ENCODE measurements at regions of chr15 and their contacts with region 1.

Region 1: DNA sequence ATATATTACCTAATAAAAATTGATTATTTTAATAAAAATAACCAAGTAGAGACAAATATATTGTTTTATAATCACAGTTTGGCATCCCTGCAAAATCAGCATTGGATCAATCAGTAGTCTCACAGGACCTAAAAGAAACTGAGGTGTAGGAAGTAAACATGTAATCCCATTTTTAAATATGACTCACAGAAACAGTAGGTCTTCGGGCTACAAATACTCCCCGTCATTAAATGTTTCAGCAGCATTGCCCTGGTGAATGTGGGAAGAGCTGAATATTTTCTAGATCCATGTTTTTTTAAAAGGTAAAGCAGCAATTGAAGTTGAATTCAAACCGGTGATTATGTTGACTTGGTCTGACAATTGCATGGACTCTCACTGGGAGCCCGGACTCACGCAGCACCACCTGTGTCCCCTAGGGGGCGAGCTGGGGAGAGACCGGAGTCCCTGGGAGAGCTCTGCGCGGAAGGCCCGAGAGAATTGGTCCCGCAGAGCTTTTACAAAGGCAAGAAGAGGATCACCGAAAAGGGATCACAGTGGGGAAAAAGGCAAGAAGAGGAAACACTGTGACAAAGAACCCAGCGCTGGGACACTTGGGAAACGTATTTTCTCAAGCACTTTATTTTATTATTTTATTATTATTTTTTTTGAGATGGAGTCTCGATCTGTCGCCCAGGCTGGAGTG is 17.2 kb upstream of the USP3 start:
- DNase-seq: peak; percentile 88 to 93
- ATAC-seq: peak; percentile 96 to 100 (median 99)
- H3K4me3 ChIP-seq: no peak overlapping the region
- H3K4me3 Mint-ChIP-seq: peak overlapping the region; percentile 72
- H3K27ac ChIP-seq: no peak overlapping the region
- H3K27ac Mint-ChIP-seq: peak overlapping the region in 1 of 2 donors; percentile 75
- H3K4me1 ChIP-seq: peaks cover 42% of the 10 kb centered on the region
- H3K4me1 Mint-ChIP-seq: peaks cover 17 to 23% of the 10 kb centered on the region in 2 donors
- H3K27me3 ChIP-seq: no peaks in the 10 kb centered on the region
- H3K27me3 Mint-ChIP-seq: no peaks in the 10 kb centered on the region
- CTCF ChIP-seq: peak; percentile 96

Region 2: GRCh38 chr15:63466378-63467192 is 20.6 kb before region 1 on chr15:
- intact Hi-C with region 1: no loop called
- DNase-seq: peak; percentile 26 to 89
- ATAC-seq: peak; percentile 86 to 97 (median 97)
- H3K4me3 ChIP-seq: no peak overlapping the region
- H3K4me3 Mint-ChIP-seq: no peak overlapping the region
- H3K27ac ChIP-seq: no peak overlapping the region
- H3K27ac Mint-ChIP-seq: no peak overlapping the region
- H3K4me1 ChIP-seq: peaks cover 6% of the 10 kb centered on the region
- H3K4me1 Mint-ChIP-seq: peaks cover 0 to 9% of the 10 kb centered on the region in 2 donors
- H3K27me3 ChIP-seq: no peaks in the 10 kb centered on the region
- H3K27me3 Mint-ChIP-seq: peaks cover 6 to 23% of the 10 kb centered on the region in 2 donors
- CTCF ChIP-seq: peak; percentile 74

Region 3: DNA sequence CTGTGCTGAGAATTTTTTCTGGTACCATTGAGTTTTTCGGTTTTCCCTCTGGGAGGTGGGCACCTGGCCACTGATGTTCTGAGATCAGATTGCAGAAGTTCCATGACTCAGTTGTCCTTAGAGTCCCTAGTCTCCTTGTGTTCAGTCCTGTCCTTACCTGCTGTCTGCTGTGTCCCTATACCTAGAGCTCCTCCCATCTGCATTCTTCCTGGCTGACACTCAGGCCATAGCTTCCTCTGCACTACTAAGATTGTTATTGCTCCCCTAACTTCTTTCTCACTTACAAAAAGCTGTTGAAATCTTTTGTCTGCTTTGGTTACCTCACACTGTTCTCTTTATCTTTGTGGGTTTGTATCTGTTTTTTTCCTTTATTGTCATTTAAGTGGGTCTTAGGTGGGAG is 30.4 kb after region 1 on chr15:
- intact Hi-C with region 1: loop called (anchors 5 kb)
- DNase-seq: peak in 1 of 2 donors; percentile 55
- ATAC-seq: peak; percentile 83 to 89 (median 88)
- H3K4me3 ChIP-seq: no peak overlapping the region
- H3K4me3 Mint-ChIP-seq: peak overlapping the region; percentile 71
- H3K27ac ChIP-seq: peak overlapping the region; percentile 19
- H3K27ac Mint-ChIP-seq: peak overlapping the region; percentile 74 to 79
- H3K4me1 ChIP-seq: peaks cover 26% of the 10 kb centered on the region
- H3K4me1 Mint-ChIP-seq: peaks cover 79 to 80% of the 10 kb centered on the region in 2 donors
- H3K27me3 ChIP-seq: no peaks in the 10 kb centered on the region
- H3K27me3 Mint-ChIP-seq: no peaks in the 10 kb centered on the region
- CTCF ChIP-seq: no peak

Measured in natural killer cell (primary cell).